A673 (cell line): ENCODE measurements at regions of chr4 and their contacts with region 1.

Region 1: GRCh38 chr4:108473221-108473620 is 147.2 kb upstream of the RPL34 start:
- DNase-seq: no peak
- H3K4me3 ChIP-seq: no peak overlapping the region
- H3K27ac ChIP-seq: no peak overlapping the region
- H3K4me1 ChIP-seq: no peaks in the 10 kb centered on the region
- H3K27me3 ChIP-seq: no peaks in the 10 kb centered on the region
- CTCF ChIP-seq: no peak

Region 2: GRCh38 chr4:108118490-108118889 is 354.7 kb before region 1 on chr4:
- CTCF ChIA-PET with region 1: no interaction called
- POLR2A ChIA-PET with region 1: no interaction called
- intact Hi-C with region 1: no loop called
- DNase-seq: no peak
- H3K4me3 ChIP-seq: no peak overlapping the region
- H3K27ac ChIP-seq: no peak overlapping the region
- H3K4me1 ChIP-seq: no peaks in the 10 kb centered on the region
- H3K27me3 ChIP-seq: no peaks in the 10 kb centered on the region
- CTCF ChIP-seq: no peak

Region 3: DNA sequence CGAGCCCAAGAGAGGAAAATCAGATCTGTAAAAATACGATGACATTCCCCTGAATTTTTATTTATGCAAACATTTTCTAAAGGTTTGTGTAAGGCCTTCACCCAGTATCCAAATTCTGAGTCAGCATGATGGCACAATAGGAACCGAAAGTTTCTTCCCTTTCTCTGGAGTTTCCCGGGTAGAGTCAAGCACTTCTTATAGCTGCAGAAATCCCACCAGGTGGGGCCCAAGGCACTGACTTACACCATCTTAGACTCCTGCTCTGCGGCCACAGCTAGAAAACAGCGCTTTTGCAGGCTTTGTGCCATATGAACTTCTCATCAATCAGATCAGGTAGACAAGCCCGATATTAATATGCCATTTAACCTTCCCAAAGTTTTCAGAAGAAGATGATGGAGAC is 317.8 kb before region 1 on chr4:
- CTCF ChIA-PET with region 1: no interaction called
- POLR2A ChIA-PET with region 1: no interaction called
- intact Hi-C with region 1: loop called (anchors 10 kb)
- DNase-seq: no peak
- H3K4me3 ChIP-seq: no peak overlapping the region
- H3K27ac ChIP-seq: no peak overlapping the region
- H3K4me1 ChIP-seq: no peaks in the 10 kb centered on the region
- H3K27me3 ChIP-seq: peaks cover 20% of the 10 kb centered on the region
- CTCF ChIP-seq: no peak

Region 4: GRCh38 chr4:108774809-108775530 is 301.7 kb after region 1 on chr4:
- CTCF ChIA-PET with region 1: no interaction called
- POLR2A ChIA-PET with region 1: no interaction called
- intact Hi-C with region 1: no loop called
- DNase-seq: peak; percentile 37
- H3K4me3 ChIP-seq: no peak overlapping the region
- H3K27ac ChIP-seq: no peak overlapping the region
- H3K4me1 ChIP-seq: no peaks in the 10 kb centered on the region
- H3K27me3 ChIP-seq: no peaks in the 10 kb centered on the region
- CTCF ChIP-seq: no peak